ENCODE measurements at regions of chr5 and their contacts with region 1.

Region 1: GRCh38 chr5:120464627-120465275 is 651 bp downstream of the PRR16 start:
- DNase-seq: peak; percentile 68
- ATAC-seq: peak; percentile 74

Region 2: DNA sequence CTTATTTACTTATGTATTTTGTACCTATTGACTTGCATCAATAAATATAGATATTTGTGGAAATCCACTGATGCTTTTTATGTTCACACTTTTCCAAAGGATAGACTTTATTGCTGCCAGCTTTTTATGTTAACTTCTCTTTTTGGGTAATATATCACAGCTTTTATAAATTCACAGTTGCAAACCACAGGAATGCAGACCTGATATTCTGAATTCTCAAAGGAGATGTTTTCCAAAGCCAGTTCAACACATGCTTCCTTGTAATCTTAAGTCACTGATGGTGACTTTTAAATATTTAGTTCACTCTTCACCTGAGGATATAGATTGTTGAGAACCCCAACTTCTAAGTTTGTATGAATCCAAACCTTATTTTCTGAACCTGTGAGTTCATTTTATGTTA is 224.0 kb before region 1 on chr5:
- intact Hi-C with region 1: no loop called
- DNase-seq: no peak
- ATAC-seq: no peak

Region 3: GRCh38 chr5:120803282-120803681 is 338.5 kb after region 1 on chr5:
- intact Hi-C with region 1: loop called (anchors 5 kb)
- DNase-seq: no peak
- ATAC-seq: no peak

Measured in Right ventricle myocardium inferior (tissue), 1 donor.